Activated B cell treated with CpG ODN at 0.5 μM for 24 hours (primary cell): ENCODE measurements at regions of chr2 and their contacts with region 1.

Region 1: GRCh38 chr2:164794432-164795231 is 47.0 kb downstream of the COBLL1 start:
- DNase-seq: no peak
- ATAC-seq: no peak
- H3K4me3 Mint-ChIP-seq: peak overlapping the region; percentile 2
- H3K27ac Mint-ChIP-seq: no peak overlapping the region
- H3K4me1 Mint-ChIP-seq: peaks cover 41% of the 10 kb centered on the region
- H3K27me3 Mint-ChIP-seq: no peaks in the 10 kb centered on the region
- CTCF ChIP-seq: no peak

Region 2: DNA sequence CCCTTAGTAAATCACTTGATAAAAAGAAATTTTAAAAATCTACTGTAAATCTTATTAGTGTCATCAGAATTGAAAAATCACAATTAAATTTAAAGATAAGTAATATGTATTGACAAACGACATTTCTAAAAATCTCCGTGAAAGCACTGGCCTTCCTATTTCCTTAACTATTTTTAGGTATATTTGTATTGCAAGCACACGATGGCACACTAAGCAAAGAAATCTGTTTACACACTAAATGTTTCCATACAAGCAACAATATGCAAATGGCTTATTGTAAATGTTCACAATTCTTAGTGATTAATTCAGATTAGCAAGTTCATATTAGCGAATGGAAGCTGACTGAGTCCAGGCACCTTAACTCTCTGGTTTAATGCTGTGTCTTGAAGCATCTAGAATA is 26.0 kb before region 1 on chr2:
- CTCF ChIA-PET with region 1: no interaction called
- POLR2A ChIA-PET with region 1: no interaction called
- intact Hi-C with region 1: no loop called
- DNase-seq: no peak
- ATAC-seq: no peak
- H3K4me3 Mint-ChIP-seq: no peak overlapping the region
- H3K27ac Mint-ChIP-seq: no peak overlapping the region
- H3K4me1 Mint-ChIP-seq: peaks cover 19% of the 10 kb centered on the region
- H3K27me3 Mint-ChIP-seq: no peaks in the 10 kb centered on the region
- CTCF ChIP-seq: no peak

Region 3: DNA sequence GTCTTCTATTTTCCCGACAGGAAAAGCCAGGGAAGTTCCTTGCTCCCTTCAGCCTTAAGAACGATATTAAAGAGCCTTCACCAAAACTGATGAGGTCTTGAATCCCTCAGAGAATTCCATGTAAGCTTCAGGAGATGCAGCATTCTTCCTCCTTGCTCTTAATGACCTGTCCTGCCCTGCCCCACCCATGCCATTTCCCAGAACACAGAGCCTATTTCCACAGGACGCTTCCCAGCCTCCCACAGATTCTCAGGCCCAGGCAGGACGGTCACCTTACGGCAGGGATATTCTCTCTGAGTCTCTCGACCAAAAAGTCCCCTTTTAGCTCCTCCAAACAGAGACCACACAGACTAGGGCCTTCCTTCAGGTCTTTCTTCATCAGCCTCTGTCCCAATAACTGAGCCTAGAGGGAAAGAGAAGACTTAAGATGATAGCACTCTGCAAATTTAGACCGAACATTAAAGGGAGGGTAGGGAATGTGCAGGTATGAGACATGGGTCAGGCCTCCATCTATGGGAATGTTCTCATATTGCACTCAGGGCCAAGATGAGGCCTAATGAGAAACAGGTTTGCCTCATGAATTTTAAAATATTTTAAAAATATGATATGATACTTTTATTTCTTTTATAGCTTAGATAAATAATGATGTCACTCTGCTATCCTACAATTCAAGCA is 15.1 kb before region 1 on chr2:
- CTCF ChIA-PET with region 1: interaction called, 4 read pairs
- POLR2A ChIA-PET with region 1: interaction called, 3 read pairs
- intact Hi-C with region 1: loop called (anchors 2 kb)
- DNase-seq: no peak
- ATAC-seq: no peak
- H3K4me3 Mint-ChIP-seq: no peak overlapping the region
- H3K27ac Mint-ChIP-seq: no peak overlapping the region
- H3K4me1 Mint-ChIP-seq: peaks cover 14% of the 10 kb centered on the region
- H3K27me3 Mint-ChIP-seq: no peaks in the 10 kb centered on the region
- CTCF ChIP-seq: no peak

Region 4: DNA sequence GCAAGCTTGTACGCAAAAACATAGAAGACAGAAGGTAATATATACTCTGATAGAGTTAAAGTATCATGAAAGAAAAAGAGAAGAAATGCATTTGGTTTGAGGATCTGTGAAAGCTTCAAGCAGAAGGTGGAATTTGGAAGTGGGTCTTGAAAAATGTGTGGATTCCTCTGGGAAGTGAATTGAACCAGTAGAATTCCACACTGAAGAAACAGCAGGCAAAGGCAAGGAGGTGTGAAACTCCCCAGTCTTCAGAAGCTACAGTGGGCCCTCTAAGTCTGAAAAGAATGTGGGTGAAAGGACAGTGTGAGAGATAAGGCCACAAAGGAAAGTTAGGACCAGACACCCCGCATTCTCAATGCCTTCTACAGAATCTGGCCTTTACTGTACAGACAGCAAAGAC is 21.4 kb after region 1 on chr2:
- CTCF ChIA-PET with region 1: no interaction called
- POLR2A ChIA-PET with region 1: no interaction called
- intact Hi-C with region 1: no loop called
- DNase-seq: no peak
- ATAC-seq: no peak
- H3K4me3 Mint-ChIP-seq: no peak overlapping the region
- H3K27ac Mint-ChIP-seq: no peak overlapping the region
- H3K4me1 Mint-ChIP-seq: peaks cover 12% of the 10 kb centered on the region
- H3K27me3 Mint-ChIP-seq: no peaks in the 10 kb centered on the region
- CTCF ChIP-seq: no peak

Region 5: GRCh38 chr2:166375736-166376487 is 1581.3 kb after region 1 on chr2 and contains the start of gene SCN9A:
- CTCF ChIA-PET with region 1: no interaction called
- POLR2A ChIA-PET with region 1: no interaction called
- intact Hi-C with region 1: no loop called
- DNase-seq: no peak
- ATAC-seq: peak; percentile 25
- H3K4me3 Mint-ChIP-seq: peak within 1 kb of the TSS; percentile 64
- H3K27ac Mint-ChIP-seq: no peak within 1 kb of the TSS
- H3K4me1 Mint-ChIP-seq: peaks cover 14% of the 10 kb centered on the region
- H3K27me3 Mint-ChIP-seq: peaks cover 32% of the 10 kb centered on the region
- CTCF ChIP-seq: no peak
- total RNA-seq, gene SCN9A: not detected in 2 replicates